ENCODE measurements at regions of chr2 and their contacts with region 1.

Region 1: GRCh38 chr2:44361330-44362206 is at the starts of genes CAMKMT and PREPL:
- DNase-seq: peak; percentile 85
- H3K4me3 ChIP-seq: peak within 1 kb of the TSS; percentile 94
- CTCF ChIP-seq: no peak

Region 2: DNA sequence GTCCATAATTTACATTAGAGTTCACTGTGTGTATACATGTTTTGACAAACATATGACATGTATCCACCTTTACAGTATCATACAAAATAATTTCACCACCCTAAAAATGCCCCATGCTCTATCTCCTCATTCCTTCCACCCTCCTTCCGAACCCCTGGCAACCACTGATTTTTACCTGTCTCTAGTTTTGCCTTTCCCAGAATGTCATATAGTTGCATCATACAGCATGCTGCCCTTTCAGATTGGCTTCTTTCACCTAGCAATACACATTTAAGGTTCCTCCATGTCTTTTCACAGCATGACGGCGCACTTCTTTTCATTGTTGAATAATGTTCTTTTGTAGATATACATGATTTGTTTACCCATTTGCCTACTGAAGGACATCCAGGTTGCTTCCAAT is 376.2 kb before region 1 on chr2:
- CTCF ChIA-PET with region 1: no interaction called
- POLR2A ChIA-PET with region 1: no interaction called
- DNase-seq: no peak
- H3K4me3 ChIP-seq: no peak overlapping the region
- CTCF ChIP-seq: no peak

Region 3: DNA sequence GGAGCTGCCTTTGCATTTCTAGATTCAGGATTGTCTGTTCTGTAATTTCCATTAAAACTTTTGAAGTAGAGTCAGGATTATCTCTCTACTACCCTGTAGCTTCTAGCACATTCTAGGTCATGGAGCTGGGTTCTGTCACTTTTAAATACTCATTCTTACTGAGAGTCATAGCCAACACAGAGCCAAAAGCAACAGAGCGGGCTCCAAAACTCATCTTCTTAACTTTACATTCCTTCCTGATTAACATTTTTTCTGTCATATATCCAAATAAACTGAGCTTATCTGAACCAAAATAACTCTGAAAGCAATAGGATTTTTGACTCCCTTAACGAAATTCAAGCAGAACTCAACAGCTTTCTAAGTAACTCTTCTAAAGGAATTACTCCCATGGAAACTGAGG is 13.2 kb before region 1 on chr2:
- CTCF ChIA-PET with region 1: interaction called, 10 read pairs
- POLR2A ChIA-PET with region 1: interaction called, 12 read pairs
- DNase-seq: no peak
- H3K4me3 ChIP-seq: no peak overlapping the region
- CTCF ChIP-seq: no peak